ENCODE measurements at regions of chr1 and their contacts with region 1.

Region 1: DNA sequence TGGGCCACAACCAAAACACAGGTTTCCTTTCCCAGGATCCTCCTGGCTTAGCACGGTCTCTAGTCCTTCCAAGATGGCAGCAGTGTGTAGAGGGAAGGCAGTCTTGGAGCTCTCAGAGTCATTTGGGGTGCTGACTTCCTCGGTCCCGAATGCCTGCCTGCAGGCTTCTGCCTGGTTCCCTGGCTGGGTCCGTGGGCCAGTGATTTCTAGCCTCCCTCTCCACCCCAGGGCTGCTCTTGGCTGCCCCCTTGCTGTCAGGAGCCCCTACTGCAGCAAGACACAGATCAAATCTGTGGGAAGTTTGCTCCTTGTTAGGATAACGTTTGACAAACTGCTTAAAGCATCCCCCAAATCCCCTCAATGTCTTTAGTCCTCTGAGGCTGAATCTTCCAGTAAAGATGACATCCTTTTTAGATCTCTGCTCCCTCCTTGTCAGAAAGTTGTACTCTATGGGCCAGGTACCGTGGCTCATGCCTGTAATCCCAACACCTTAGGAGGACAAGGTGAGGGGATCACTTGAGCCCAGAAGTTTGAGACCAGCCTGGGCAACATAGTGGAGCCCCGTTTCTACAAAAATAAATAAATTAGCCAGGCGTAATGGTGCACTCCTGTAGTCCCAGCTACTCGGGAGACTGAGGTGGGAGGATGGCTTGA is 272.5 kb downstream of the RRAGC start:
- DNase-seq: peak; percentile 27 to 70 (median 46)
- ATAC-seq: peak; percentile 68
- H3K4me3 ChIP-seq: no peak overlapping the region
- H3K4me3 Mint-ChIP-seq: no peak overlapping the region
- H3K27ac ChIP-seq: no peak overlapping the region
- H3K27ac Mint-ChIP-seq: no peak overlapping the region
- H3K4me1 ChIP-seq: peaks cover 8% of the 10 kb centered on the region
- H3K4me1 Mint-ChIP-seq: peaks cover 12% of the 10 kb centered on the region
- H3K27me3 ChIP-seq: peaks cover 1 to 4% of the 10 kb centered on the region in 2 experiments
- H3K27me3 Mint-ChIP-seq: peaks cover 22% of the 10 kb centered on the region
- CTCF ChIP-seq: peak; percentile 88

Region 2: GRCh38 chr1:38026592-38027200 is 560.4 kb before region 1 on chr1:
- CTCF ChIA-PET with region 1: no interaction called
- POLR2A ChIA-PET with region 1: no interaction called
- intact Hi-C with region 1: loop called in 1 of 2 experiments (anchors 2 kb)
- DNase-seq: peak in 5 of 14 experiments; percentile 20 to 55 (median 50)
- ATAC-seq: no peak
- H3K4me3 ChIP-seq: no peak overlapping the region
- H3K4me3 Mint-ChIP-seq: no peak overlapping the region
- H3K27ac ChIP-seq: no peak overlapping the region
- H3K27ac Mint-ChIP-seq: no peak overlapping the region
- H3K4me1 ChIP-seq: peaks cover 42% of the 10 kb centered on the region
- H3K4me1 Mint-ChIP-seq: peaks cover 32% of the 10 kb centered on the region
- H3K27me3 ChIP-seq: no peaks in the 10 kb centered on the region
- H3K27me3 Mint-ChIP-seq: no peaks in the 10 kb centered on the region
- CTCF ChIP-seq: peak; percentile 19

Region 3: DNA sequence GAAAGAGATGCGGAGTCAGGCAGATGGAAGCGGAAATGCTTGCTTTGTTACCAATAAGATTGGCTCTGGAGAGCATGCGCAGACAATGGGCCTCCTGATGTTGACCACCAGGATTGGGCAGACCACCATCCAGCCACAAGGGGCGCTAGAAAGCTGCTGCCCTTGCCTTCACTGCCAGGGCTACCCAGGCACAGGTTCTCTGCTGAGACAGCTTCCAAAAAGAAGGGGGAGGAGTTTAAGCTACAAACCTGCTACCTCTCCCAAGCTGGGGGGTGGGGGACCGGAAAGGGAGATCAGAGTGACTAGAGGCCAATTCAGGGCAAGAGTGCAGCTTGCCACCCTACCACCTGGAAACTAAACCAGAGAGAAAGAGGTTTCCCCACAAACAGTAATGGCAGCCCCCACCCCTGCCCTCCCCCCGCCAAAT is 97.3 kb before region 1 on chr1:
- CTCF ChIA-PET with region 1: no interaction called
- POLR2A ChIA-PET with region 1: no interaction called
- intact Hi-C with region 1: loop called (anchors 2 to 5 kb)
- DNase-seq: peak; percentile 11 to 61 (median 20)
- ATAC-seq: no peak
- H3K4me3 ChIP-seq: no peak overlapping the region
- H3K4me3 Mint-ChIP-seq: no peak overlapping the region
- H3K27ac ChIP-seq: no peak overlapping the region
- H3K27ac Mint-ChIP-seq: no peak overlapping the region
- H3K4me1 ChIP-seq: peaks cover 2% of the 10 kb centered on the region
- H3K4me1 Mint-ChIP-seq: no peaks in the 10 kb centered on the region
- H3K27me3 ChIP-seq: peaks cover 0 to 7% of the 10 kb centered on the region in 2 experiments
- H3K27me3 Mint-ChIP-seq: peaks cover 13% of the 10 kb centered on the region
- CTCF ChIP-seq: peak; percentile 57

Region 4: DNA sequence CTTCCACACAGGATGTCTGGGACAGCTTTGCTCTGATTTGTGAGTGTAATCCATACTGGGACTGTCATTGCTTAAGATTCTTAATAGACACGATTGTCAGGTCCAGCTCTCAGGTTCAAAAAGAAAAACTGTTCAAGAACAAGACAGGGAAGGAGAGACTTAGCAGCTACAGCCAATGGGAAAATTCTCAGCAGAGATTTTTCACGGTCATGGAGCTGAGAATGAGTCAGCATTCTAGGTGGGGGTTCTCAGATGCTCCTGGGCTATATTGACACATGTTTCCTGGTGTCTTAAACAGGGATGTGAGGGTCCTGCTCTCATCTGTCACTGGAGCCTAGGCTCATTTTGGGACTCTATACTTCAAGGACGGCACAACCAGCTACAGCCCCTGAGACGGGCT is 45.9 kb before region 1 on chr1:
- CTCF ChIA-PET with region 1: no interaction called
- POLR2A ChIA-PET with region 1: interaction called, 3 read pairs
- intact Hi-C with region 1: loop called in 1 of 2 experiments (anchors 5 kb)
- DNase-seq: no peak
- ATAC-seq: no peak
- H3K4me3 ChIP-seq: no peak overlapping the region
- H3K4me3 Mint-ChIP-seq: no peak overlapping the region
- H3K27ac ChIP-seq: no peak overlapping the region
- H3K27ac Mint-ChIP-seq: no peak overlapping the region
- H3K4me1 ChIP-seq: no peaks in the 10 kb centered on the region
- H3K4me1 Mint-ChIP-seq: no peaks in the 10 kb centered on the region
- H3K27me3 ChIP-seq: no peaks in the 10 kb centered on the region
- H3K27me3 Mint-ChIP-seq: peaks cover 15% of the 10 kb centered on the region
- CTCF ChIP-seq: no peak

Region 5: DNA sequence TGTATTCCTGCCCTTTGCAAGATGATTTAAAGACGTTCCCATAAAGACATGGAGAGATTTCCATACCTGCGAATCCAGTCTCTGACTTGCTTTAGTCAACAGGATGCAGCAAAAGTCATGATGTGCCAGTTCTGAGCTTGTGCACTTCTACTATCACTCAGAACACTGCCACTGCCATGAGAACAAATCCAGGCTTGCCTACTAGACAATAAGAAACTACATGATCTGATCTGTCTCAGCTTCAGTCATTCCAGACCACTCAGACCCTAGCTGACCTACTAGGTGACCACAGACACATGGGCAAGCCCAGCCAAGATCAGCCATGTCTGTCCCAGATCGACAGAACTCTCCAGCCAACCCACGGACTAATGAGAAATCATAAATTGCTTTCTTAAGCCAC is 53.3 kb after region 1 on chr1:
- CTCF ChIA-PET with region 1: no interaction called
- POLR2A ChIA-PET with region 1: no interaction called
- intact Hi-C with region 1: loop called in 1 of 2 experiments (anchors 5 kb)
- DNase-seq: no peak
- ATAC-seq: no peak
- H3K4me3 ChIP-seq: no peak overlapping the region
- H3K4me3 Mint-ChIP-seq: no peak overlapping the region
- H3K27ac ChIP-seq: no peak overlapping the region
- H3K27ac Mint-ChIP-seq: no peak overlapping the region
- H3K4me1 ChIP-seq: no peaks in the 10 kb centered on the region
- H3K4me1 Mint-ChIP-seq: no peaks in the 10 kb centered on the region
- H3K27me3 ChIP-seq: peaks cover 5 to 10% of the 10 kb centered on the region in 2 experiments
- H3K27me3 Mint-ChIP-seq: peaks cover 33% of the 10 kb centered on the region
- CTCF ChIP-seq: no peak

Region 6: DNA sequence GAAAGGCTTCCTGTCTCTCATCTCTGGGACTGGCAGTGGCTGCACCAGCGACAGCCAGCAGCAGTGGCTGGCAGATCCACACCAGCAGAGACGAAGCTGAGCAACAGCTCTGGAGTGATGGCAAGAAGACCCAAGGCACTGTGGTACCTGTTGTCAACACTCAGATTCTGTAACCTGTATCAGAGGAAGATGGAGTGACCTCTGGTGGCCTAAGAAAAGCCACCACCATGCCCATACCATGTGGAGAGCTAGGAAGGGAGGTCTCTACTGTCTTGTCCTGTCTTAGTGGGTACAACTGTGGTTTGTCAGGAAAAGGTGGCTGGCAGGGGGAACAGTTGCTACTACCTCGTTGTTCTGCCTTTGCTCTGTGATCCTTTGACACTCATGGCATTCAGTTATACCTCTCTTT is 377.0 kb after region 1 on chr1:
- CTCF ChIA-PET with region 1: no interaction called
- POLR2A ChIA-PET with region 1: no interaction called
- intact Hi-C with region 1: no loop called
- DNase-seq: peak in 5 of 14 experiments; percentile 1 to 45 (median 22)
- ATAC-seq: peak; percentile 62
- H3K4me3 ChIP-seq: no peak overlapping the region
- H3K4me3 Mint-ChIP-seq: no peak overlapping the region
- H3K27ac ChIP-seq: no peak overlapping the region
- H3K27ac Mint-ChIP-seq: no peak overlapping the region
- H3K4me1 ChIP-seq: peaks cover 5% of the 10 kb centered on the region
- H3K4me1 Mint-ChIP-seq: peaks cover 11% of the 10 kb centered on the region
- H3K27me3 ChIP-seq: no peaks in the 10 kb centered on the region
- H3K27me3 Mint-ChIP-seq: no peaks in the 10 kb centered on the region
- CTCF ChIP-seq: no peak

Measured in CD4-positive, alpha-beta T cell (primary cell).